K562 (cell line): ENCODE measurements at regions of chr1 and their contacts with region 1.

Region 1: DNA sequence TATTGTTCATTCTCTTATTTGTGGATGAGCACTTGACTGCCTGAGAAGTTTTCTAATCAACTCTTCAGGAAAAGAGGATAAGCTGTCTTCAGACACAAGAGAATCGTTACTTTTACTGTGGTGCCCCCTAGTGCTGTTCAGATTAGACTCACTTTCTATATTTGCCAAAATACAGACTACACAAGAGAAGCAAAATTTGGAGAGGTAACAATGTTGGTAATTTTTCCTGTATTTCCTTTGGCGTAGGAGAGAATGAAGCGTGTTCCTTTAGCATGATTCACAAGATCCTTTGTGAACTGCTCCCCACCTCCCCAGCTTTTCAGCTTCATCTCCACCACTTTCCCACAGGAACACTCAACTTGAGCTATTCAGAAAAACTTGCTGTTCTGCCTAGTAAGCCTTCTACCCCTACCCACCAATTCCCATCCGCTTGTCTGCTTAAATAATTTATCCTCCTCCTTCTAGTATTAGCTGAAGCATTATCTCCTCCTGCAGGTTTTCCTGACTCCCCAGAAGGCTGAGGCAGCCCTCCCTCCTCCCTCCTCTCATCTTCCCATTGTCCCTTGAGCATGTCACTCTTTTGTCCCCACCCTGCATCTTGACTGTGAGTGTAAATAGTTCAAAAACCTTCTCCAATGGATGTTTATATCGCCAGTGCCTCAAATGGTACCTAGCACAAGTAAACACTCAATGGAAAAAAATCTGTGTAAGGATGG is 4.5 kb downstream of the TNFSF4 start:
- DNase-seq: peak in 2 of 4 experiments; percentile 29 to 52
- ATAC-seq: peak; percentile 82
- H3K4me3 ChIP-seq: no peak overlapping the region
- H3K27ac ChIP-seq: no peak overlapping the region
- H3K4me1 ChIP-seq: no peaks in the 10 kb centered on the region
- H3K27me3 ChIP-seq: peaks cover 0 to 13% of the 10 kb centered on the region in 2 experiments; a peak in 2 of 5 replicates
- CTCF ChIP-seq: peak; percentile 56 to 82 (median 59); a peak in 4 of 6 replicates
- EP300 ChIP-seq: no peak
- POLR2A ChIP-seq: no peak
- RAD21 ChIP-seq: peak; percentile 97 to 99

Region 2: GRCh38 chr1:172429331-172430127 is 773.1 kb before region 1 on chr1:
- CTCF ChIA-PET with region 1: no interaction called
- POLR2A ChIA-PET with region 1: no interaction called
- in situ Hi-C with region 1: no loop called
- intact Hi-C with region 1: loop called (anchors 10 kb)
- DNase-seq: peak; percentile 45 to 80 (median 55)
- ATAC-seq: peak; percentile 82
- H3K4me3 ChIP-seq: no peak overlapping the region
- H3K27ac ChIP-seq: no peak overlapping the region
- H3K4me1 ChIP-seq: peaks cover 0 to 25% of the 10 kb centered on the region in 2 experiments; a peak in 2 of 5 replicates
- H3K27me3 ChIP-seq: no peaks in the 10 kb centered on the region
- CTCF ChIP-seq: peak; percentile 83 to 99 (median 94)
- EP300 ChIP-seq: no peak
- POLR2A ChIP-seq: no peak
- RAD21 ChIP-seq: peak; percentile 93 to 99

Region 3: GRCh38 chr1:172745014-172745413 is 457.6 kb before region 1 on chr1:
- CTCF ChIA-PET with region 1: interaction called, 62 read pairs
- POLR2A ChIA-PET with region 1: interaction called, 3 read pairs
- in situ Hi-C with region 1: loop called (anchors 5 kb)
- intact Hi-C with region 1: loop called (anchors 1 kb)
- DNase-seq: peak; percentile 28 to 71 (median 39)
- ATAC-seq: peak; percentile 90
- H3K4me3 ChIP-seq: no peak overlapping the region
- H3K27ac ChIP-seq: no peak overlapping the region
- H3K4me1 ChIP-seq: peaks cover 3 to 7% of the 10 kb centered on the region in 2 experiments; a peak in 3 of 5 replicates
- H3K27me3 ChIP-seq: no peaks in the 10 kb centered on the region; a peak in 1 of 5 replicates
- CTCF ChIP-seq: peak; percentile 69 to 88 (median 70)
- EP300 ChIP-seq: no peak
- POLR2A ChIP-seq: no peak
- RAD21 ChIP-seq: peak; percentile 99

Region 4: GRCh38 chr1:172826096-172826743 is 376.4 kb before region 1 on chr1:
- CTCF ChIA-PET with region 1: interaction called, 7 read pairs
- POLR2A ChIA-PET with region 1: no interaction called
- in situ Hi-C with region 1: no loop called
- intact Hi-C with region 1: loop called (anchors 1 kb)
- DNase-seq: peak in 2 of 4 experiments; percentile 22 to 35
- ATAC-seq: peak; percentile 79
- H3K4me3 ChIP-seq: no peak overlapping the region
- H3K27ac ChIP-seq: no peak overlapping the region
- H3K4me1 ChIP-seq: peaks cover 0 to 11% of the 10 kb centered on the region in 2 experiments; a peak in 3 of 5 replicates
- H3K27me3 ChIP-seq: no peaks in the 10 kb centered on the region
- CTCF ChIP-seq: peak; percentile 50 to 75 (median 64); a peak in 5 of 6 replicates
- EP300 ChIP-seq: no peak
- POLR2A ChIP-seq: no peak
- RAD21 ChIP-seq: peak; percentile 92 to 96

Region 5: DNA sequence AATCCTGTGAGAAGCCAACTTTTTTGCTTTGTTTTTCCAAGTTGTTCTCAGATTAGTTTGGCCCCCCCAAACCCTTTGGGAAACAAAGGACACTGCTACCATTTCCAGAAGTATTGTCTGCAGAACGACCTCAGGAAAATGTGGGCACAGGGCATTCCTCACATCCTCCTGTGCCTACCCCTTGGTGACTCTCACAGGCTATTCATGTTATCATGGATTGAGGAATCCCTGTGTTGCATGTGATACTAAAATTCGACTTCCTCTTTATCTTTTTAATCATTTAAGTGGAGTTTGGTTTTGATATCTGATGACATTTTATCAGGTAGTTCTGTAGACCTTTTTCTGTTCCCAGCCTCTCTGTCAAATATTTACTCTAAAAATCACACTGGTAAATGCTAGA is 359.1 kb before region 1 on chr1:
- CTCF ChIA-PET with region 1: no interaction called
- POLR2A ChIA-PET with region 1: no interaction called
- in situ Hi-C with region 1: no loop called
- intact Hi-C with region 1: loop called (anchors 5 kb)
- DNase-seq: no peak
- ATAC-seq: no peak
- H3K4me3 ChIP-seq: no peak overlapping the region
- H3K27ac ChIP-seq: no peak overlapping the region
- H3K4me1 ChIP-seq: no peaks in the 10 kb centered on the region; a peak in 1 of 5 replicates
- H3K27me3 ChIP-seq: no peaks in the 10 kb centered on the region
- CTCF ChIP-seq: no peak
- EP300 ChIP-seq: no peak
- POLR2A ChIP-seq: no peak
- RAD21 ChIP-seq: no peak

Region 6: DNA sequence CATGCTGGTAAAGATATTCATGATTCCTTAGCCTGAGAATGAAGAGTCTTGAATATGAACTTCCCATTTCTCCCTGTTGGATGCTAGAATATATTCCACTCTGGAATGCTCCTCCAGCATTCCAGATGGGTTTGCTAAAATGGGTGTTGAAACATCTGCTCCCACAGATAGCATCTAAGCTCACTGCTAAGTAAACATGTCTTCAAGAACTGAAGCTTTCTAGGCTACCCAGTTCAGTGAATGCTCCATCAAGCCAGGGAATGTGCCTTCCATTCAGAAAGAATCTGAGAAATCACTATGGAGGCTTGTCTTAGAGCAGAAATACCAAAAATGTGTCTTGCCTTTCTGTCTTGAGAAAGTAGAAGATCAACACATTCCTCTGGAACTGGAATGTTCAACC is 233.0 kb before region 1 on chr1:
- CTCF ChIA-PET with region 1: no interaction called
- POLR2A ChIA-PET with region 1: no interaction called
- in situ Hi-C with region 1: no loop called
- intact Hi-C with region 1: loop called (anchors 10 kb)
- DNase-seq: no peak
- ATAC-seq: no peak
- H3K4me3 ChIP-seq: no peak overlapping the region
- H3K27ac ChIP-seq: no peak overlapping the region
- H3K4me1 ChIP-seq: no peaks in the 10 kb centered on the region
- H3K27me3 ChIP-seq: no peaks in the 10 kb centered on the region
- CTCF ChIP-seq: no peak
- EP300 ChIP-seq: no peak
- POLR2A ChIP-seq: no peak
- RAD21 ChIP-seq: no peak

Region 7: GRCh38 chr1:173297798-173298391 is 95.3 kb after region 1 on chr1:
- CTCF ChIA-PET with region 1: no interaction called
- POLR2A ChIA-PET with region 1: no interaction called
- in situ Hi-C with region 1: no loop called
- intact Hi-C with region 1: no loop called
- DNase-seq: no peak
- ATAC-seq: peak; percentile 31; the same call in 2 of the 3 replicates
- H3K4me3 ChIP-seq: no peak overlapping the region
- H3K27ac ChIP-seq: no peak overlapping the region
- H3K4me1 ChIP-seq: peaks cover 5 to 25% of the 10 kb centered on the region in 2 experiments
- H3K27me3 ChIP-seq: no peaks in the 10 kb centered on the region
- CTCF ChIP-seq: no peak
- EP300 ChIP-seq: no peak
- POLR2A ChIP-seq: no peak
- RAD21 ChIP-seq: no peak